ENCODE measurements at regions of chr7 and their contacts with region 1.

Region 1: DNA sequence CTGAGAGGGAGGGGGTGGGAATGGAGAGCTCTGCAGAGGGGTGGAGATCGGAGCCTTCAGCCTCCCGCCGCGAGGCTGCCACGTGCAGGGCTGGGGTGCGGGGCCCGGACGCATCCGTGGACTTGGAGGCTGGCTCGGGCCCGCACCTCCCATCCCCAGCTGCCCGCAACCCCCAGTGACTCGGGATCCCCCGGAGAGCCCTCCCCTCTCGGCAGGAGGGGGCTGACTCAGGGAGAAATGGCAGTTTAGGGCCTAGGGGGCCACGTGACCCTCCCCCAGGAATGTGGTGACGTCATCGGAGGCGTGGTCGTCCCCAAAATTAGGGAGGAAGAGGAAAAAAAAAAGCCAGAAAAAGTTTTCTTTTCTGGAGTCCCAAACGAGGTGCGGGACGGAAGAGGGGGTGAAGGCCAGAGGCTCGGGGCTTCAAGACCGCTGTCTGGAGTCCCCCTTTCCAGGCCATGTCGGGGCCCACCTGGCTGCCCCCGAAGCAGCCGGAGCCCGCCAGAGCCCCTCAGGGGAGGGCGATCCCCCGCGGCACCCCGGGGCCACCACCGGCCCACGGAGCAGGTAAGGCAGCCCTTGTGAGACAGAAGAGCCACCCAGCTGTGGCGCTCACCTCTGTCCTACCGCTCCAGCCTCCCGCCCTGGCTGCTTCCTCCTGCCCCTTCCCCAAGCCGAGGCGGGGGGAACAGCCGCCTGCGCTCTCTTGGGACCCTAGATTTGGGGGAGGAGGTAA is at the start of gene TRIP6:
- DNase-seq: no peak
- H3K4me3 ChIP-seq: peak within 1 kb of the TSS; percentile 77 to 86
- H3K27ac ChIP-seq: peak within 1 kb of the TSS; percentile 98
- H3K4me1 ChIP-seq: peaks cover 41% of the 10 kb centered on the region
- H3K27me3 ChIP-seq: no peaks in the 10 kb centered on the region
- CTCF ChIP-seq: no peak
- POLR2A ChIP-seq: peak in 1 of 2 donors; percentile 21
- total RNA-seq, gene TRIP6: 52.1 TPM

Region 2: DNA sequence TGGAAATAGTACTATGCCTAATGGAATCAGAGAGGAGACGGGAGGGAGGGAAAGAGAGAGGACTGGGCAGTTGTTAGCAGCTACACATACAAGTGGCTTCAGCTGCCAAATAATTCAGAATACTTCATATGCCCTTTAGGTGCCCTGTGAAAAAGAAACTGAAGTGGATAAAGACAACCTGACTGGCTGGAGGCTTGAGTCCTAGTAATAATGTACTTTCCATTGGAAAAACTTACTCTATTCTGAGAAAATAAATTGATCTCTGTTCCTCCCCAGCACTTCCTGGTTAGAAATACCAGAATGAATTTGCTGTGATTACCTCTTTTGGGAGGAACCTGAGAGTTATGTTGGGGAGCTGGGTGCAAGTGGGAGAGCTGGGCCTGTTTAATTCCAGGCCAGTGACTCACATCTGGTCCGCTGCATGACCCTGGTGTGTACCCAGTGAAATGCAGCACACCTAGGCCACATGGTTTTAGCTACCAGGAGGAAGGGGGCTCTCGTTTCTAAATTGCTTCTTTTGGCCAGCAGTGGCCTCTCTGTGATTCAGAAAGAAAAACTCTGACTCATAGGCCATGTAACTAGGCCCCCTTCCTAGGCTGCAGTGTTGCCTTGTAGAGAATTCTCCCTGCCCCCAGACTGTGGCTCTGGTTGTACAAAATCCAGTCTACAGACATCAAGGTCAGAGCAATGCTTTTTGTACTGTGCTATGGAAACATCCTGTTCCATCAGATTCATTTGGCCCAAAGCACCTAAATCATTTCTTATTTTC is 321.7 kb before region 1 on chr7:
- intact Hi-C with region 1: loop called (anchors 10 kb)
- DNase-seq: no peak
- H3K4me3 ChIP-seq: peak overlapping the region in 1 of 2 donors; percentile 9
- H3K27ac ChIP-seq: peak overlapping the region; percentile 93
- H3K4me1 ChIP-seq: peaks cover 65% of the 10 kb centered on the region
- H3K27me3 ChIP-seq: no peaks in the 10 kb centered on the region
- CTCF ChIP-seq: no peak
- POLR2A ChIP-seq: no peak

Region 3: DNA sequence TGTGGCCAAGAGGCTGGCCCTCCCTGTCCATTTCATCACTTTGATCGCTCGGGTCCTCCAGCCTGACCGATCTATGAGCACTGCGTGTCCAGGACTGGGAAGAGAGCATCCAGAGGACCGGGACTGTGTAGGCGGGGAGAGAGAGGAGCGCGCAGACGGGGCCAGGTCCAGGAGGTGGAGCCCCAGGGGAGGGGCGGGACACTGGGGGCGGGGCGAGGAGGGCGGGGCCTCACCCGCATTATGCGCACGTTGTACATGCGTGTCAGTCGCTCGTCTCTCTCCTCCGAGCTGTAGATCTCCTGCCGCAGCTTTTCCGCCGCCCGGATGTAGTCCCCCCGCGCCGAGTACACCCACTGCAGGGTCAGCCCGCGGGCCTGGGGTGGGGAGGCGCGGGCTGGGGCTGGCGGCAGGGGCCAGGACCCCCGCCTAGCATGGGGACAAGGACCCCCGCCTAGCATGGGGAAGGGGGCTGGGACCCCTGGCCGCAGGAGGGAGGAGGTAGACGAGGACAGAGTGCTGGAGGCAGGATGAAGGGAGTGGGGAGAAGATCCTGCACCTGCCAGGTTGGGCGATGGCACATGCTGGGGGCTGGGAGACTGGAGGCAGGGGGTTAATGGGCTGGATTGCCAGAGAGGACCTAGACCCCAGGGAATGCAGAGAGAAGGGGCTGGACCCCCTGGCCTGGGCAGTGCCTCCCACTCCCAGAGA is 240.5 kb before region 1 on chr7:
- intact Hi-C with region 1: no loop called
- DNase-seq: no peak
- H3K4me3 ChIP-seq: peak overlapping the region; percentile 35 to 41
- H3K27ac ChIP-seq: peak overlapping the region; percentile 20
- H3K4me1 ChIP-seq: peaks cover 15% of the 10 kb centered on the region
- H3K27me3 ChIP-seq: no peaks in the 10 kb centered on the region
- CTCF ChIP-seq: no peak
- POLR2A ChIP-seq: no peak

Region 4: GRCh38 chr7:100736671-100737070 is 130.5 kb before region 1 on chr7:
- intact Hi-C with region 1: no loop called
- DNase-seq: no peak
- H3K4me3 ChIP-seq: no peak overlapping the region
- H3K27ac ChIP-seq: no peak overlapping the region
- H3K4me1 ChIP-seq: no peaks in the 10 kb centered on the region
- H3K27me3 ChIP-seq: no peaks in the 10 kb centered on the region
- CTCF ChIP-seq: no peak
- POLR2A ChIP-seq: no peak

Measured in vagina (tissue), 2 donors.